PC-3 (cell line): ENCODE measurements at regions of chr1 and their contacts with region 1.

Region 1: GRCh38 chr1:77978969-77979876 is at the start of gene FUBP1:
- DNase-seq: peak; percentile 99
- ATAC-seq: peak; percentile 79
- H3K4me3 ChIP-seq: peak within 1 kb of the TSS; percentile 94
- H3K27ac ChIP-seq: peak within 1 kb of the TSS; percentile 93
- H3K4me1 ChIP-seq: peaks cover 28% of the 10 kb centered on the region
- H3K27me3 ChIP-seq: no peaks in the 10 kb centered on the region
- CTCF ChIP-seq: peak; percentile 69
- total RNA-seq, gene FUBP1: 81.5 and 93.4 TPM in 2 replicates

Region 2: DNA sequence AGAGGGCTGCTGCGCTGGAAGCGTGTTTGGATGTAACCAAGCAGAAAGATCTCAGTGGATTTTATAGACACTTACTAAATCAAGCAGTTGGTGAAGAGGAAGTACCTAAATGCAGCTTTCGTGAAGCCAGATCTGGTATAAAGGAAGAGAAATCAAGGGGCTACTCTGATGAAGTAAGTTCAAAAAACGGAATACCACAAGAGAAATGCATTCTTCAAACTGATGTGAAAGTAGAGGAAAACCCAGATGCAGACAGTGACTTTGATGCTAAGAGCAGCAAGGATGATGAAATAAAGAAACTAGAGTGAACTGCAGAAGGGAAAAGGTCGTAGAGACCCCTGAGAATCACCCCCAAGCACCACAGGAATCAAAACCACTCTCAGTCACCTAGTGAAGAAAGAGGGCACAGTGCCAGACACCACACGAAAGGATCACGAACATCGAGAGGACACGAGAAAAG is 131.6 kb before region 1 on chr1:
- CTCF ChIA-PET with region 1: no interaction called
- POLR2A ChIA-PET with region 1: no interaction called
- intact Hi-C with region 1: no loop called
- DNase-seq: no peak
- ATAC-seq: no peak
- H3K4me3 ChIP-seq: no peak overlapping the region
- H3K27ac ChIP-seq: no peak overlapping the region
- H3K4me1 ChIP-seq: no peaks in the 10 kb centered on the region
- H3K27me3 ChIP-seq: no peaks in the 10 kb centered on the region
- CTCF ChIP-seq: no peak

Region 3: DNA sequence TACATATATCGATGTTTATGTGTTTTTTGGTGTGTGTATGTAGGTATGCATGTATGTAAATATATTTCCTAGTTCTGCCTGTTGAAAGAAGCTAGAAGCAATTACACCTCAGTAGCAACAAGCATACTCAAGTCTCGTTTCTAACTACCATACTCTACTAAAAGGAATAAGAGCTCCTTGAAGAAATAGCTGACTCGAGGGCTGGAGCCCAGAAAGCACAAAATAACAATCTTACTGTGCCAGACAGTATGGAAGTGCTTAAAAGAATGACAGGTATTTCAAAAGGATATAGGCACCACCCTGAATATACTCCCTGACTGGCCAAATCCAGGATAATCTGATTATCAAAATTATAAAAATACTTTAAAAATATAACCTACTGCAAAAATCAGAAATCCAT is 23.5 kb before region 1 on chr1:
- CTCF ChIA-PET with region 1: no interaction called
- POLR2A ChIA-PET with region 1: interaction called, 8 read pairs
- intact Hi-C with region 1: loop called (anchors 2 kb)
- DNase-seq: no peak
- ATAC-seq: no peak
- H3K4me3 ChIP-seq: no peak overlapping the region
- H3K27ac ChIP-seq: no peak overlapping the region
- H3K4me1 ChIP-seq: no peaks in the 10 kb centered on the region
- H3K27me3 ChIP-seq: no peaks in the 10 kb centered on the region
- CTCF ChIP-seq: no peak

Region 4: GRCh38 chr1:78004719-78005447 is 25.7 kb after region 1 on chr1 and contains the start of gene DNAJB4:
- CTCF ChIA-PET with region 1: interaction called, 5 read pairs
- POLR2A ChIA-PET with region 1: interaction called, 24 read pairs
- intact Hi-C with region 1: loop called (anchors 2 kb)
- DNase-seq: peak; percentile 95
- ATAC-seq: peak; percentile 95
- H3K4me3 ChIP-seq: peak within 1 kb of the TSS; percentile 84
- H3K27ac ChIP-seq: peak within 1 kb of the TSS; percentile 92
- H3K4me1 ChIP-seq: peaks cover 36% of the 10 kb centered on the region
- H3K27me3 ChIP-seq: no peaks in the 10 kb centered on the region
- CTCF ChIP-seq: no peak
- total RNA-seq, gene DNAJB4: 4.5 and 10.5 TPM in 2 replicates

Region 5: DNA sequence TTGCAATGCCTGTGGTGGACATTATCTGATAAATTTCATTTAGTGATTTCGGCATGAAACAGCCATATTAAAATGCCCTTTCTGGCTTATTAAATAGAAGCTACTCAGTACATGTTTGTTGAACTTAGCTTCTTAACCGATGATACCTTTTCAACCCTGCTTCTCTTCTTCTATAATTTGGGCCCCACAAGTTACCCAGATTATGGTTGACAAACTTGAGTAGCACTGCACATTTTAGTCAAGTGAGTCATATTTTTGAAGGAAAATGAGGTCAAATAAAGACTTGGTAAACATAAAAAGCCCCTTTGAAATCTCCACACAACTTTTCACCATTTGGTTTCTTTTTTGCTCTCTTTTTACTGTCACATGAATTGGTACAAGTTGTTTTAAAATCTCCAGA is 100.4 kb after region 1 on chr1:
- CTCF ChIA-PET with region 1: no interaction called
- POLR2A ChIA-PET with region 1: no interaction called
- intact Hi-C with region 1: loop called (anchors 2 kb)
- DNase-seq: peak; percentile 56
- ATAC-seq: peak; percentile 59
- H3K4me3 ChIP-seq: no peak overlapping the region
- H3K27ac ChIP-seq: no peak overlapping the region
- H3K4me1 ChIP-seq: peaks cover 30% of the 10 kb centered on the region
- H3K27me3 ChIP-seq: no peaks in the 10 kb centered on the region
- CTCF ChIP-seq: no peak

Region 6: GRCh38 chr1:78519446-78519845 is 540.2 kb after region 1 on chr1:
- CTCF ChIA-PET with region 1: no interaction called
- POLR2A ChIA-PET with region 1: no interaction called
- intact Hi-C with region 1: no loop called
- DNase-seq: peak; percentile 16
- ATAC-seq: no peak
- H3K4me3 ChIP-seq: no peak overlapping the region
- H3K27ac ChIP-seq: no peak overlapping the region
- H3K4me1 ChIP-seq: no peaks in the 10 kb centered on the region
- H3K27me3 ChIP-seq: no peaks in the 10 kb centered on the region
- CTCF ChIP-seq: no peak